ENCODE measurements at regions of chr11 and their contacts with region 1.

Region 1: GRCh38 chr11:74388678-74389327 is 9.4 kb downstream of the PGM2L1 start:
- DNase-seq: peak; percentile 78
- ATAC-seq: peak; percentile 80
- H3K4me3 Mint-ChIP-seq: no peak overlapping the region
- H3K27ac Mint-ChIP-seq: no peak overlapping the region
- H3K4me1 Mint-ChIP-seq: peaks cover 8% of the 10 kb centered on the region
- H3K27me3 Mint-ChIP-seq: no peaks in the 10 kb centered on the region

Region 2: DNA sequence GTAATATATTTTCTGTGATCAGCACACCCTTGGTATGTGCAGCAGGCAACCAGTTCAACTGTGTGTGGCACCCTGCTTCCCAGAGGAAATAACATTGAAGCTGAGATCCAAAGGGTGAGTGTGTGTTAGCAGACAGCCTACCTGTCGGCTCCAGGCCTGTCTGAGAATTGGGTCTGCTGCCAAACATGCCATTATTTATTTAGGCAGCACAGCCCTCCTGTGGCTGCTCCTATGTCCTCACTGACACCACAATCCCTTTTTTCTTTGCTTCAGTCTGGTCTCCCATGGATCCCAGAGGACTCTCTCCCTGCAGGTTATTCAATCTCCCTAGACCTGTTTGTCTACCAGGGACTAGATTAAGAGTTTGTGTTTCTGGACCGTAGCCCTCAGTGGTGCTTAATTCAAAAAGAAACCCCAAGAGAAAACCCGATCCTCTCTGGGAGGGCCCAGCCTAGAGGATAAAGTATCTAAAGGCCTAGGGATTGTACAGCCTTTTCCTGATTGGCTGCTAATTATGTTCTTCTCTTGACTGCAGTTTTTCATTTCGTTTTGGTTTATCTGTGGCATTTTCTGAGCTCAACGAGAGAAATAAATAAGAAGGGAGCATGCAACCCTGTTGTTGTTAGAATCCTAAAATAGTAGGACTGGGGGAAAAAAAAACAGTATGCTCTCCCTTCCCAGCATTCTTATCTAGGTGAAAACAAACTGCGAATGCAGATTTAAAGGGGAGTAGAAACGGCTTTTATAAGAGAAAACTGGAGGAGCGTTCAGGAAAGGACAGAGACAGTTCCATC is 54.5 kb after region 1 on chr11:
- CTCF ChIA-PET with region 1: interaction called, 168 read pairs
- POLR2A ChIA-PET with region 1: no interaction called
- DNase-seq: no peak
- ATAC-seq: no peak
- H3K4me3 Mint-ChIP-seq: no peak overlapping the region
- H3K27ac Mint-ChIP-seq: no peak overlapping the region
- H3K4me1 Mint-ChIP-seq: no peaks in the 10 kb centered on the region
- H3K27me3 Mint-ChIP-seq: peaks cover 6% of the 10 kb centered on the region